HCT116 (cell line): ENCODE measurements at regions of chr1 and their contacts with region 1.

Region 1: DNA sequence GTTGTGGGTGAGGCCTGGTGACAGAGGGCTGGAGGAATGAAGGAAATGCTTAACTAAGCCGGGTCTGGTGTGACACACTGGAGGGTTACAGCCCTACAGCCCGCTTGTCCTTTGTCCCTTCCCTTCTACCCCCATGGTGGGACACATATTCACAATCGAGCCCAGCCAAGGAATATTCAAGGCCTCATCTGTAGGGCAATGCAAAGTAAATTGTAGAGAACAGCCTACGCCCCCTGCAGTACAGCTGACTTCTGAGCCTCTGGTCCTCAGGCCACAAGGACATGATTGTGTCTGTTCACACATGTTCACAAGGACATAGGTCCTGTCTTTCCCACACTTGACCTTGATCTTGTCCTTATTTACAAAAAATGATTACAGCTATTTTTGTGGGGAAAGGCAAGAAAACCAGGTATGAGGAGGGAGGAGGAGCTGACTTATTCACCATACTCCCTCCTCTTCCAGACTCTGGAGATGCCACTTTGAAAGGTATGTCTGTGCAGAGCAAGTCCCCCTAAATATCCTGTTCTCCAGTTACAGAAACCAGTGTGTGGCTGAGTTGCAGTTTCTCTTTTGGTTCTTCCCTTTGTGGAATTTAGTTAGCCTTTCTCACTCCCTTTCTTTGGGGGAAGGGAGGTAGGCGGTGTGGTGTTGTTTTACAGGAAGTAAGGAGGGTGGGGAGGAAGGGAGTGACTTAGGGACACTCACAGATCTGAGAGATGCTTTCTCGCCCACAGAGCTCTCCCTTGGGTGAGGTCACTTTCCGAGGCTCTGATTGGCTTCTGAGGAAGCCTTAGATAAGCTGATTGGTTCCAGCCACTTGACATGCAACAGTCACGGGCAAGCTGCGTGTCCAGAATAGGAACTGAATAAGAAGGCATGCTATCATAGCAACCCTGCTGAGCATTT is 14.6 kb downstream of the POLR3GL start:
- DNase-seq: peak; percentile 96
- ATAC-seq: peak; percentile 95
- H3K4me3 ChIP-seq: peak overlapping the region; percentile 12 to 37
- H3K27ac ChIP-seq: peak overlapping the region; percentile 89
- H3K4me1 ChIP-seq: peaks cover 30 to 45% of the 10 kb centered on the region in 2 experiments
- H3K27me3 ChIP-seq: no peaks in the 10 kb centered on the region
- CTCF ChIP-seq: peak in 2 of 3 experiments; percentile 22 to 37; a peak in 3 of 6 replicates
- POLR2A ChIP-seq: no peak
- RAD21 ChIP-seq: no peak

Region 2: GRCh38 chr1:145827966-145828692 is 151.0 kb before region 1 on chr1:
- CTCF ChIA-PET with region 1: no interaction called
- POLR2A ChIA-PET with region 1: no interaction called
- RAD21 ChIA-PET with region 1: no interaction called
- intact Hi-C with region 1: no loop called
- DNase-seq: no peak
- ATAC-seq: no peak
- H3K4me3 ChIP-seq: no peak overlapping the region
- H3K27ac ChIP-seq: no peak overlapping the region
- H3K4me1 ChIP-seq: peaks cover 2 to 7% of the 10 kb centered on the region in 2 experiments; a peak in 1 of 4 replicates
- H3K27me3 ChIP-seq: no peaks in the 10 kb centered on the region
- CTCF ChIP-seq: no peak
- POLR2A ChIP-seq: no peak
- RAD21 ChIP-seq: no peak

Region 3: GRCh38 chr1:145927063-145927886 is 51.8 kb before region 1 on chr1 and contains the start of gene RBM8A:
- CTCF ChIA-PET with region 1: interaction called, 6 read pairs
- POLR2A ChIA-PET with region 1: interaction called, 3 read pairs
- RAD21 ChIA-PET with region 1: no interaction called
- intact Hi-C with region 1: loop called (anchors 2 kb)
- DNase-seq: peak; percentile 98
- ATAC-seq: peak; percentile 97
- H3K4me3 ChIP-seq: peak within 1 kb of the TSS; percentile 86 to 88
- H3K27ac ChIP-seq: peak within 1 kb of the TSS; percentile 99
- H3K4me1 ChIP-seq: peaks cover 9 to 18% of the 10 kb centered on the region in 2 experiments; a peak in 3 of 4 replicates
- H3K27me3 ChIP-seq: no peaks in the 10 kb centered on the region
- CTCF ChIP-seq: peak; percentile 16 to 62 (median 59); a peak in 5 of 6 replicates
- POLR2A ChIP-seq: peak; percentile 87
- RAD21 ChIP-seq: 0 out of 2 replicates have a peak, but pooled peaks have one; percentile 3
- total RNA-seq, gene RBM8A: 195 TPM

Region 4: GRCh38 chr1:145957443-145958319 is 21.4 kb before region 1 on chr1 and contains the start of gene LIX1L:
- CTCF ChIA-PET with region 1: interaction called, 12 read pairs
- POLR2A ChIA-PET with region 1: interaction called, 12 read pairs
- RAD21 ChIA-PET with region 1: interaction called in 1 of 2 experiments, 3 read pairs
- intact Hi-C with region 1: no loop called
- DNase-seq: peak; percentile 90
- ATAC-seq: peak; percentile 96
- H3K4me3 ChIP-seq: peak within 1 kb of the TSS; percentile 59 to 67
- H3K27ac ChIP-seq: peak within 1 kb of the TSS; percentile 63
- H3K4me1 ChIP-seq: peaks cover 14 to 28% of the 10 kb centered on the region in 2 experiments
- H3K27me3 ChIP-seq: no peaks in the 10 kb centered on the region
- CTCF ChIP-seq: no peak
- POLR2A ChIP-seq: peak; percentile 58
- RAD21 ChIP-seq: no peak
- total RNA-seq, gene LIX1L: 12.4 TPM

Region 5: GRCh38 chr1:145963995-145964901 is 14.9 kb before region 1 on chr1 and contains the starts of genes ANKRD34A and POLR3GL:
- CTCF ChIA-PET with region 1: interaction called, 11 read pairs
- POLR2A ChIA-PET with region 1: interaction called, 11 read pairs
- RAD21 ChIA-PET with region 1: no interaction called
- intact Hi-C with region 1: no loop called
- DNase-seq: peak; percentile 92
- ATAC-seq: peak; percentile 97
- H3K4me3 ChIP-seq: peak within 1 kb of the TSS; percentile 70 to 73
- H3K27ac ChIP-seq: peak within 1 kb of the TSS; percentile 64
- H3K4me1 ChIP-seq: peaks cover 19 to 27% of the 10 kb centered on the region in 2 experiments
- H3K27me3 ChIP-seq: no peaks in the 10 kb centered on the region
- CTCF ChIP-seq: no peak
- POLR2A ChIP-seq: peak; percentile 85
- RAD21 ChIP-seq: no peak
- total RNA-seq, gene ANKRD34A: 1.1 TPM
- total RNA-seq, gene POLR3GL: 17.9 TPM

Region 6: DNA sequence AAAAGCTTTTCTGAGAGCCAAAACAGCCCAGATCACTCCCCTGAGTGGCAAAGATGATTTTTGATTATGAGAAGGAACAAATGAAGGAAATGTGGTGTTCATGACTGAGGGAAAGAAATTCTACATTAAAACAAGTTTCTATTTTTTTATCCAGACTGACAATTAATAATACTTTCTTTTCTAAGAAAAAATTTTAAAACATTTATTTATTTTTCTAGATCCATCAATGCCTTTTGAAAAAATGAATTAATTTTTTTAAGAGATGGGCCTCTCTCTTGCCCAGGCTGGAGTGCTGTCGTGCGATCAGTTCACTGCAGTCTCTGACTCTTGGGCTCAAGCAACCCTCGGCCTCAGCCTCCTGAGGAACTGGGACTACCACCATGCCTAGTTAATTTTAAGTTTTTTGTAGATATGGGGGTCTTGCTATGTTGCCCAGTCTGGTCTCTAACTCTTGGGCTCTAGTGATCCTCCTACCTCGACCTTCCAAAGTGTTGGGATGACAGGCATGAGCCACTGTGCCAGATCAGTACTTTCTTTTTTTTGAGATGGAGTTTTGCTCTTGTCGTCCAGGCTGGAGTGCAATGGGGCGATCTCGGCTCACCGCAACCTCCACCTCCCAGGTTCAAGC is 28.5 kb after region 1 on chr1:
- CTCF ChIA-PET with region 1: interaction called, 45 read pairs
- POLR2A ChIA-PET with region 1: interaction called, 19 read pairs
- RAD21 ChIA-PET with region 1: interaction called, 6 to 13 read pairs
- intact Hi-C with region 1: loop called (anchors 1 kb)
- DNase-seq: no peak
- ATAC-seq: no peak
- H3K4me3 ChIP-seq: no peak overlapping the region
- H3K27ac ChIP-seq: no peak overlapping the region
- H3K4me1 ChIP-seq: peaks cover 0 to 6% of the 10 kb centered on the region in 2 experiments; a peak in 2 of 4 replicates
- H3K27me3 ChIP-seq: no peaks in the 10 kb centered on the region
- CTCF ChIP-seq: no peak
- POLR2A ChIP-seq: no peak
- RAD21 ChIP-seq: no peak

Region 7: GRCh38 chr1:146012737-146013403 is 33.8 kb after region 1 on chr1:
- CTCF ChIA-PET with region 1: interaction called, 40 read pairs
- POLR2A ChIA-PET with region 1: interaction called, 19 read pairs
- RAD21 ChIA-PET with region 1: interaction called, 3 to 5 read pairs
- intact Hi-C with region 1: loop called (anchors 1 kb)
- DNase-seq: peak; percentile 83
- ATAC-seq: peak; percentile 84
- H3K4me3 ChIP-seq: no peak overlapping the region
- H3K27ac ChIP-seq: no peak overlapping the region
- H3K4me1 ChIP-seq: peaks cover 0 to 5% of the 10 kb centered on the region in 2 experiments; a peak in 2 of 4 replicates
- H3K27me3 ChIP-seq: no peaks in the 10 kb centered on the region
- CTCF ChIP-seq: peak; percentile 58 to 95 (median 86)
- POLR2A ChIP-seq: no peak
- RAD21 ChIP-seq: peak; percentile 97

Region 8: DNA sequence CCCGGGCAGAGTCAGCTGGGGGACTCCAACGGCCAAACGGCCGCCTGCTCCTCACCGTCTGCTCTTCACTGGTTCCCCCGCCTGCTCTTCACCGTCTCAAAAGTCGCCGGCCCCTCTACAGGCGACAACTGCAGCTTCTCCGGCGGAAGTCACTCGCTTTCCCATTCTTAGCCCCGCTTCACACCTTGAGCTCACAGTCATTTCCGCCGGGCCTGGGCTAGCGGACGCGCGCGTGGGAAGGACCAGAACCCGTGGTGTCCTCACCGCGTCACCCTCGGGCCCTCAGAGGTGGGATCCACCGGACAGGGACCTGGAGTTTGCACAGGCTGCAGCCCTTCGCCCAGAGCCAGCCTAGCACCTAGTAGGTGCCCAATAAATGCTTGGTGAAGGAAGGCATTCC is 70.3 kb after region 1 on chr1:
- CTCF ChIA-PET with region 1: interaction called, 4 read pairs
- POLR2A ChIA-PET with region 1: interaction called, 27 read pairs
- RAD21 ChIA-PET with region 1: no interaction called
- intact Hi-C with region 1: no loop called
- DNase-seq: no peak
- ATAC-seq: no peak
- H3K4me3 ChIP-seq: no peak overlapping the region
- H3K27ac ChIP-seq: no peak overlapping the region
- H3K4me1 ChIP-seq: peaks cover 3 to 19% of the 10 kb centered on the region in 2 experiments; a peak in 3 of 4 replicates
- H3K27me3 ChIP-seq: no peaks in the 10 kb centered on the region
- CTCF ChIP-seq: no peak
- POLR2A ChIP-seq: no peak
- RAD21 ChIP-seq: no peak